Gastrocnemius medialis (tissue), 4 donors: ENCODE measurements at regions of chr2 and their contacts with region 1.

Region 1: DNA sequence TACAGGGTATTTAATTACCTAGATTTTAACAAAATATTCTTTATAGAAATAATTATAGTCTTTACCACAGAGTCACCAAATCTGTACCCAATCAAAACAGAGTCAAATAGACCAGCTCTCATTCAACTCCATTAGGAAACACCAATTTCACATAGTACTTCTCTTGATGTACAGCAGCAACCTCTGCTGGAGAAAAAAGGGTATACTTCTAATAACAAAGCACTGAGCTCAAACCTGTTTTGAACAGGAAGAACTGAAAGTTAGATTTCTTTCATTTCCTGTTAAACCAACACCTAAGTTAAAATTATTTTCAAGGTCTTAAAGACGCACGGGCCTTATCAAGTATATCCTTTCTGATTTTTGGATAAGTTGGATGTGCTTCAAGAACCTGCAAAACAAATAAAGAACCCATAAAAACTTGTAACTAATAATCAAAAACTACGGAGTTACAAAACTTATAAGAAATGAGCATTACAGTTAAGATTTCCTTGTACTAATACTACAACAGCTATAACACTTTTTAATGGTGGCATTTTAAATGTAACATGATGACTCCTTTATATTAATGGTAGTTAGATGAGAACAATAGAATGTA is 79.0 kb downstream of the TTC21B start:
- DNase-seq: no peak
- ATAC-seq: no peak
- H3K4me3 ChIP-seq: no peak overlapping the region
- H3K27ac ChIP-seq: no peak overlapping the region
- H3K4me1 ChIP-seq: no peaks in the 10 kb centered on the region
- H3K27me3 ChIP-seq: no peaks in the 10 kb centered on the region
- CTCF ChIP-seq: peak in 3 of 5 experiments; percentile 4 to 39 (median 34)
- POLR2A ChIP-seq: no peak

Region 2: DNA sequence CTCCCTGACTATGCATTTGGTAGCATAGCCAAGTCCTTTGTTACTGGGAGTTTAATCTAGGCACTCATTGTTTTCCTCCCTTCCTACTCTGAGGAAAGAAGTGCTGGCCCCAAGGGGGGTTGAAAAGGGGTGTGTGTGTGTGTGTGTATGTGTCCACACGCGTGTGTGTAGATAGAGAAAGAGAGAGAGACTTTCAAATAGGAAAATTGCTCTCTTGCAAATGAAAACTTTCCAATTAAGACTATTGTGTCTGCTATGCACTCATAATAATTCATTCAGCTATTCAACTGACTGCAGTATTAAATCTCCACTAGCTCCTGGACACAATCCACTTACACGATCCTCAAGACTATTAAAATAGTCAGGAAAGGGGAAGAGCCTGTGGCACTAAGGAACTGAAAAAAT is 498.0 kb before region 1 on chr2:
- in situ Hi-C with region 1: loop called in 1 of 4 experiments (anchors 25 kb)
- intact Hi-C with region 1: no loop called
- DNase-seq: no peak
- ATAC-seq: no peak
- H3K4me3 ChIP-seq: no peak overlapping the region
- H3K27ac ChIP-seq: no peak overlapping the region
- H3K4me1 ChIP-seq: no peaks in the 10 kb centered on the region
- H3K27me3 ChIP-seq: no peaks in the 10 kb centered on the region
- CTCF ChIP-seq: no peak
- POLR2A ChIP-seq: no peak

Region 3: DNA sequence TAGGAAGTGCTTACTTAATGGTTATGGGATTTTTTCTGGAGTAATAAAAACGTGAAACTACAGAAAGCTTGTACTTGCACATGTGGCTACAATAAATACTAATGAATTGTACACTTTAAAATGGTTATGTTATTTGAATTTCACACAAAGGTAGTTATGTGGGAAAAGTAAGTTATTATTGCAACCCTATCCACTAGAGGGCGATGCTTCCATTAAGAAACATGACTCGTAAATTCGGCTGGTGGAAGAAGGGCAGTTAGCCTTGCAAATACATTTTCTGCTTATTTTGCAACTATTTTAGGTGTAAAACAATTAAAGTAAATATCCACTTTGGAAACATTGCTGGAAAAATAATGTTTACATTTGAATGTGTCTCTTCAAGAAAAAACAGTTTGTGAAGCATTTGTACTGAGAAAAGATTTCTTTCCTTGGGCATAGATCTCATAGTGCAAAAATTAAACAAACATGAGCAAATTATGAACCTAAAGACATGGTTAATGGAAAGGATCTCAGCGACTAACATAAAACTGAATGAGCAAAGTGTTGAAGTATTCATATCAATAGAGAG is 473.2 kb before region 1 on chr2:
- in situ Hi-C with region 1: loop called in 2 of 4 experiments (anchors 25 kb)
- intact Hi-C with region 1: loop called (anchors 10 kb)
- DNase-seq: no peak
- ATAC-seq: no peak
- H3K4me3 ChIP-seq: no peak overlapping the region
- H3K27ac ChIP-seq: no peak overlapping the region
- H3K4me1 ChIP-seq: no peaks in the 10 kb centered on the region
- H3K27me3 ChIP-seq: no peaks in the 10 kb centered on the region
- CTCF ChIP-seq: peak in 4 of 5 experiments; percentile 23 to 59 (median 47)
- POLR2A ChIP-seq: no peak